OCI-LY7 (cell line): ENCODE measurements at regions of chr10 and their contacts with region 1.

Region 1: DNA sequence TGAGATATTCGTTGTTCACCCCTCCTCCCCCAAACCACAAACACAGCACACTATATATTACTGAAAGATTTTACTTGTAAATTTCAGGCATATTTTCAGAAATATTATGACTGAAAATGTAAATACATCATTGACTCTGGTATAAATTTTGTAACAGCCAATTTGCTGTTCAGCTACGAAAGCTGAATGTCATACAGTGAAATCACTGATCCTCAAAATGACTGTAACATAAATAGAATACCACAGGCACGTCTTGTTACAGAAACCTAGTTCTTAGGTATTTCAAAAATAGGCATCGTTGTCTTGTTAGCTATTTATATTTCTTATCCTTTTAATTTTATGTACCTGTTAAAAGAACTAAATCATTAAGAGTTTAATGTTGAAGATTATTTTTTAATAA is 15.1 kb downstream of the TRUB1 start:
- DNase-seq: no peak
- H3K4me3 ChIP-seq: no peak overlapping the region
- H3K27ac ChIP-seq: no peak overlapping the region
- H3K4me1 ChIP-seq: no peaks in the 10 kb centered on the region
- CTCF ChIP-seq: no peak

Region 2: DNA sequence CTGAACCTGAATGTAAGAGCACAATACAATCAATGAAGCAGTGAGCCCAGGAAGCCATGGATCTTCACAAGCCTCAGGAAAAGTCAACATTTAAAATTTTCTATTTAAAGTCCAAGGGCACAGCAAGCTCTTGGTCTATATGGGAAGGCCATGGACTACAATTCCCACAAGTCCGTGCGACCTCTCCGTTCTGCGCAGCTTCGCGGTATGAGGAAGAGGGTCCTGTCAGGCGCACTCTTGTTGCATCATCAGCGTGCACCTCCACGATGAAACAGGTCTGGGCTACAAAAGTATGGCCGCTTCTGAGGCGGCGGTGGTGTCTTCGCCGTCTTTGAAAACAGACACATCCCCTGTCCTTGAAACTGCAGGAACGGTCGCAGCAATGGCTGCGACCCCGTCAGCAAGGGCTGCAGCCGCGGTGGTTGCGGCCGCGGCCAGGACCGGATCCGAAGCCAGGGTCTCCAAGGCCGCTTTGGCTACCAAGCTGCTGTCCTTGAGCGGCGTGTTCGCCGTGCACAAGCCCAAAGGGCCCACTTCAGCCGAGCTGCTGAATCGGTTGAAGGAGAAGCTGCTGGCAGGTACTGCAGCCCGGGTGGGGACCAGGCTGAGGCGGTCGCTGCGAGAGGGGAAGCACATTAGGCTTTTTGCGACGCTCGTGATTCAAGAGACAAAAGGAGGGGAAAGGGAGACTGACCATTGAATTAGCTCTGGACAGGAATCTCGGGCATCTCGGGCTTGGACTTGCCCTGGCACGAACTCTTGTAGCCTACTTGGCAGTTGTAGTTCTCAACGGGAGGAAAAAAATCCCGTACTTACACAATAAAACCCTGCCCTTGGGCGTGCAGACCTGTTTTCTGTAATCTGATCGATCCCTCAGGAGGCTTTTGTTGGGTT is 14.8 kb before region 1 on chr10 and contains the start of gene TRUB1:
- CTCF ChIA-PET with region 1: interaction called, 3 read pairs
- POLR2A ChIA-PET with region 1: interaction called, 10 read pairs
- intact Hi-C with region 1: no loop called
- DNase-seq: peak; percentile 94
- H3K4me3 ChIP-seq: peak within 1 kb of the TSS; percentile 99
- H3K27ac ChIP-seq: peak within 1 kb of the TSS; percentile 46
- H3K4me1 ChIP-seq: peaks cover 11% of the 10 kb centered on the region
- CTCF ChIP-seq: no peak
- total RNA-seq, gene TRUB1: 18.7 and 30.8 TPM in 2 replicates

Region 3: DNA sequence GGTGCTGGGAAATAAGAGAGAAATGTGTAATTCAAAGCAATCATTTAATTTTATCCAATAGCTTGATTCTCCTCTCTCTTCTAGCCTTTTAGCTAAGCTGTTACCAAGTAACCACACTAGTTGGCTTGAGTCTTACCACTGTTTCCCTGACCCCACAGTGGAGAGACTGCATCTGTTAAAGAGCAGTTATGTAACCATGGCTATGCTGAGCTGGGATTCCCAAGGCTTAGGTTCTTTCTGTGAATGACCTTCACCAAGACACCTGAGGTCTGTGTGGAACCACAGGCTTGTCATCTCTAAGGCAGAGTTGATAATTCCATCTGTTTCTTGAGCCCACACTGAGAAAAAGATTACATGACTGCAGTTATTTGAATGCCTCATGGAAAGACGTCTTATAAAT is 92.5 kb after region 1 on chr10:
- CTCF ChIA-PET with region 1: no interaction called
- POLR2A ChIA-PET with region 1: no interaction called
- intact Hi-C with region 1: no loop called
- DNase-seq: no peak
- H3K4me3 ChIP-seq: no peak overlapping the region
- H3K27ac ChIP-seq: no peak overlapping the region
- H3K4me1 ChIP-seq: no peaks in the 10 kb centered on the region
- CTCF ChIP-seq: no peak

Region 4: DNA sequence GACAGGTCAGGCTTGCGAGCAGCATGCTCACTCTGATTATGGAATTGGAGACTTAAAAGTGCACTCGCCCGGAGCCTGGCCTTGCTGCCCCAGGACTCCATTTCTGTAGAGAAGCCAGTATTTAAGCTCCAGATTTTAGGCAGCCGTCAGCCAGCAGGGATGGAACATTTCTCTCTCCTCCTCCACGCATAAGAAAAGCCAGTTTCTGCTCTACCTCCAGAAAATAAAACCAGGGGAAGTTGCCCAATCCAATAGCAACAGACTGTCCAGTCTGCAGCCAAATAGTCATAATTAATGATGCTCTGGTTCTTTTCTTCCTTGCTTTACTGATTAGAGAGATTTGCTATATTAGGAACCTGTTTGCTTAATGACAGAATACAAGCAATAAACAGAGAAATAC is 1116.8 kb after region 1 on chr10:
- CTCF ChIA-PET with region 1: no interaction called
- POLR2A ChIA-PET with region 1: no interaction called
- intact Hi-C with region 1: no loop called
- DNase-seq: no peak
- H3K4me3 ChIP-seq: no peak overlapping the region
- H3K27ac ChIP-seq: no peak overlapping the region
- H3K4me1 ChIP-seq: no peaks in the 10 kb centered on the region
- CTCF ChIP-seq: no peak

Region 5: DNA sequence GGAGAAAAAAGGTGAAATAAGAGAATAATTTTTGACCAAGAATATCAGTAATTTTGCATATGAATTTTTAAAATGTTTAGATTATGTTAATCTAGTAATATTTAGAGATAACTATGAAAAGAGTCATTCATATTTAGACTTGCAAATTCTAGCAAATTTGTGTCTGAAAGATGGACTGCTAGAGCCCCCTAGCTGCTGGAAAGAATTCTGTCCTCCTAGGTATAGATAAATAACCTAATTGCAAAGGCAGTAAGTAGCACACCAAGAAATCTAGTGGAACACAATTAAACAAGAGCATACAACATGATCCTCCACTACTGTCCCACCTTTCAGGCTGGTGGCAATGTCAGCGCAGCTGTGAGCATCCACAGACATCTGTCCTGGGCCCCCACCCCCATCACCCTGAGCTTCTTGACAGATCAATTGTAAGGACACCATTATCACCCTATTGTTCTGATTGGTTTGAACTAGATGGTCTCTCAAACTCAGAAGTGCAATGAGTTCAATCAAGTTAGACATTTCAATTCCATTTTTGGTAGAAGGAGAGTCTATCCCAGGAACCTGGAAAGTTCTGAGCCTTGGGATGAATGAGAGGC is 1335.0 kb after region 1 on chr10:
- CTCF ChIA-PET with region 1: no interaction called
- POLR2A ChIA-PET with region 1: no interaction called
- intact Hi-C with region 1: no loop called
- DNase-seq: peak; percentile 1
- H3K4me3 ChIP-seq: no peak overlapping the region
- H3K27ac ChIP-seq: no peak overlapping the region
- H3K4me1 ChIP-seq: no peaks in the 10 kb centered on the region
- CTCF ChIP-seq: peak; percentile 66